ENCODE measurements at regions of chr10 and their contacts with region 1.

Region 1: DNA sequence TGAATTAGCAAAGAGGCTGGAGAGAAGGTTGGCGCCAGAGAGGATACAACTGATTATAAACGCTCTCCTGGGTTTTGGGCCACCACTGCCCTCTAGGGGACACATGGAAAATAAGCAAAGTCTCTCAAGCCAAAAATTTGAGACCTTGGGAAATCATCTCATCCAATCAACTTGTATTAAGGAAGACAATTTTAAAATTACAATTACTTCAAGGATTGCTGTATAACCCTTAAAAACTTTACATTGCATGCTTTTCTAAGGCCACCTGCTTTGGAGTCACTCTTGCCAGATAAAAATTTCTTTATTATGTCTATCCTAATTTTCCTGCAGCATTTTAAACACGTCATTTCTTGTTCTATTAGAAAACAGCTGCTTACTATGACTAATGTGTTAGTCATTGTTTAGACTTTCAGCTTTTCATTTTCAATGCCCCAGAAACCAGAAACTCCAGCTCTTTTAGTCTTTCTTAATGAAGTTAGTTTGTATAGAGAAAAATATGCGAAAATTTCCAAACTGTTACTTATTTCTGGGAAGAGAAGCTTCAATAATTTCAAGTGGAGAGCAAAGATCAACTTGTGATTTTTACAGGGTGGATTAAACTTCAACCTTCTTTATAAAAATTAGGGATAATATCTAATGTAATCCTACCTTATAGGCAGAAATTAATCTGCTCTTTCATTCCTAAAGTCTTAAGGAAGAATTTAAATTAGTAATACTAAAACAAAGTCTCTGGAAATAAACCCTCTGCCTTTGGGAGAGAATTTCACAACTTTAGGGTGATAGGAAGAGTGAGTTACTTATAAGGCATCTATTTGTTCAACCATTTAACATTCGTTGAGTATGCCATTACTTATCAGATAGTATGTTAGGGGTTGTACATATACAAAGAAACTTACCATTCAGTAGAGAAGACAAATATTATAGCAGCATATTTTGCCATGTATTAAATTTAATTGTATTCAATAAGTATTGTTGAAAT is 20.6 kb upstream of the RHOBTB1 start:
- DNase-seq: peak in 12 of 14 experiments; percentile 15 to 66 (median 33)
- ATAC-seq: peak; percentile 67
- H3K4me3 ChIP-seq: no peak overlapping the region
- H3K4me3 Mint-ChIP-seq: no peak overlapping the region
- H3K27ac ChIP-seq: no peak overlapping the region
- H3K27ac Mint-ChIP-seq: no peak overlapping the region
- H3K4me1 ChIP-seq: no peaks in the 10 kb centered on the region
- H3K4me1 Mint-ChIP-seq: no peaks in the 10 kb centered on the region
- H3K27me3 ChIP-seq: peaks cover 0 to 20% of the 10 kb centered on the region in 2 experiments
- H3K27me3 Mint-ChIP-seq: peaks cover 32% of the 10 kb centered on the region
- CTCF ChIP-seq: peak; percentile 95

Region 2: DNA sequence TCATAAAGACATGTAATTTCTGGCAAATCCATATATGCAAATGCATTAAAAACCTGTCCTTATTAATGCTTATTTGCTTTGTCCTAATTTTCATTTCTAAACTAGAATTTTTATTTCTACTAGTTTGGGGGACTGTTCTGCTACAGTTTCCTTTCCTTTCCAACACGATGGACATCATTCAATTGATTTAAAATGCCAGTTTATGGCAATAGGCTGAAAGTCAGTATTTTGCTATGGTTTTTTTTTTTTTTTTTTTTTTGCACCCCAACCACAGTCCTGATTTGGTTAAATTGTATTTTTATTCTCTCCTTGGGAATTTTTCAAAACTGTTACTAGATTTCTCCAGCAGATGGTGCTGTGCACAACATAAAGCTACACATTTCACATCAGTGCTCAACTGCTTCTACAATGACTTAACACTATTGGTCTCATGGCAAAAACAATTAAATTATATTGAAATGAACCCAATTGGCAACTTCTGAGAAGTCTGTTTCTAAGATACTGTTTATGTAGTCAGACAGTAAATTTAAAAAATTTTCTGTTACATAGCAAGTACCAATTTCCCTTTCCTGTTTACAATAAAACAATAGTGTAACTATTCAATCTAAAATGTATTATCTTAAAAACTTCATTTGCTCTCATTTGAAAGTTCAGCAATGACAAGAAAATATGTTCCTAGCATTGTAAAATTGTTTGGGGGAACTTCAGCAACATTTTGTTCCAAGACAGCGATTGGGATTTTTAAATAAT is 864.4 kb before region 1 on chr10:
- CTCF ChIA-PET with region 1: no interaction called
- POLR2A ChIA-PET with region 1: no interaction called
- intact Hi-C with region 1: loop called (anchors 2 to 10 kb)
- DNase-seq: peak in 4 of 14 experiments; percentile 6 to 67 (median 56)
- ATAC-seq: peak; percentile 66
- H3K4me3 ChIP-seq: no peak overlapping the region
- H3K4me3 Mint-ChIP-seq: no peak overlapping the region
- H3K27ac ChIP-seq: no peak overlapping the region
- H3K27ac Mint-ChIP-seq: no peak overlapping the region
- H3K4me1 ChIP-seq: no peaks in the 10 kb centered on the region
- H3K4me1 Mint-ChIP-seq: no peaks in the 10 kb centered on the region
- H3K27me3 ChIP-seq: no peaks in the 10 kb centered on the region
- H3K27me3 Mint-ChIP-seq: no peaks in the 10 kb centered on the region
- CTCF ChIP-seq: peak; percentile 76

Region 3: DNA sequence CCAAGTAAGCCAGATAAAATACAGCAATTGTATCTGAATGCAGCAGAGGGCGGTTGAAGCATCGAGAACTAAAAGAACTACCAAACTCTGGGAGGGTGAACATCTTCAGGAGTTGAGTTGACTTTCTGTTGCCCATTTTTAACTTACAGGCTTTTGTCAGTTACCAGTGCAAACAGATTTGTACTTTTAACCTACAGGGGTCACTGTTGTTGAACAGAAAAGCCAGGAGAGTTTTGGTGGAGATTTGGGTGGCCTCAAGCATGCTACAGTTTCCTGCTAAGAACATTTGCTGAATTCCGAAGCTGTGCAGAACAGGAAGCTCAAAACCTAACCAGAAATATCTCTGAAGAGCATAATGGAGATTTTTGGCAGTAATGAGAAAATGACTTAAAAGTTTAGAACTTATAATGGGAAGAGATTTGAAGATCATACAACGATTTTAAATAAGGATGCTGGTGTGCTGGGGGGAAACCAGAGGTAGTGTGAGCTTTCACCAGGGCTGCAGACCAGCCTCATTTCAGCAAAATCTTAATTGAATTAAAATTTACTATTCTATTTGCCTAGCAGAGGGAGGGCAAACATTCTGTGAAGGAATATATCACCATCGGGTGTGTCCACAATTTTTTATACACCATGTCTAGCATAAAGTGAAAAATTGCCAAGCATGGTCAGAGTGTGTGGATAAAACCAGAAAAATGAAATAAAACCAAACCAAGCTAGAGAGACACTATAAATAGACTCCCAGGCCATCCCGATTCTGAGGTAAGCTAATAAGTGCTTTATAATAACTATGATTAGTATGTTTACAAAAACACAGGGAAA is 849.6 kb before region 1 on chr10:
- CTCF ChIA-PET with region 1: no interaction called
- POLR2A ChIA-PET with region 1: no interaction called
- intact Hi-C with region 1: loop called in 1 of 2 experiments (anchors 1 kb)
- DNase-seq: peak in 4 of 14 experiments; percentile 4 to 51 (median 38)
- ATAC-seq: peak; percentile 68
- H3K4me3 ChIP-seq: no peak overlapping the region
- H3K4me3 Mint-ChIP-seq: no peak overlapping the region
- H3K27ac ChIP-seq: no peak overlapping the region
- H3K27ac Mint-ChIP-seq: no peak overlapping the region
- H3K4me1 ChIP-seq: no peaks in the 10 kb centered on the region
- H3K4me1 Mint-ChIP-seq: no peaks in the 10 kb centered on the region
- H3K27me3 ChIP-seq: no peaks in the 10 kb centered on the region
- H3K27me3 Mint-ChIP-seq: no peaks in the 10 kb centered on the region
- CTCF ChIP-seq: peak; percentile 36

Region 4: DNA sequence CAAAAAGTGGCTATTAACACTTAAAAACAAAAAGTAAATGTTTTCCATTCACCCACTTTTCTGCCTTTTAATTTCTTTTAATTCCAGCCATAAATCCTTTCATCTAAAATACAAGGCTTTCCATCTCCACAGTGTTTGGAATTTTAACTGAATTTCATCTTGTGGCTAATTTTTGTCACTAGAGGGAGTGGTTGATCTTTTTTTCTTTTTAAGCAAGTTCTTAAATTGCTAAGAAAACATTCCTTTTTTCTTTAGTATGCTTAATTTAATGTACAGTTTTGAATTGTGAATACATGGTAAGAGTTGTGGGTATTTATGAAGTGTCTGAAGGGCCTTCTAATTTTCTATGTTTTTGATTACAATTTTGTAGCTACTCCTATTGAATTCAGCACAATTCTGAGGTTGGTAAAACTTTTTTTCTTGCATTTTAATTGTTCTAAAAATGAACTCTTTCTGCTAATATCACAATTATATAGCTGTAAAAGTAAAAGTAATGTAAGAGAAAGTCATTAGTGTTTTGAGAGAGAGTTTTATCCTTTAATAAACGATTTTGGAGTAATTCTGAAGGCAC is 520.0 kb before region 1 on chr10:
- CTCF ChIA-PET with region 1: no interaction called
- POLR2A ChIA-PET with region 1: no interaction called
- intact Hi-C with region 1: loop called in 1 of 2 experiments (anchors 10 kb)
- DNase-seq: peak in 3 of 14 experiments; percentile 12 to 21 (median 13)
- ATAC-seq: no peak
- H3K4me3 ChIP-seq: no peak overlapping the region
- H3K4me3 Mint-ChIP-seq: no peak overlapping the region
- H3K27ac ChIP-seq: no peak overlapping the region
- H3K27ac Mint-ChIP-seq: no peak overlapping the region
- H3K4me1 ChIP-seq: peaks cover 2% of the 10 kb centered on the region
- H3K4me1 Mint-ChIP-seq: peaks cover 23% of the 10 kb centered on the region
- H3K27me3 ChIP-seq: no peaks in the 10 kb centered on the region
- H3K27me3 Mint-ChIP-seq: no peaks in the 10 kb centered on the region
- CTCF ChIP-seq: peak; percentile 33

Region 5: DNA sequence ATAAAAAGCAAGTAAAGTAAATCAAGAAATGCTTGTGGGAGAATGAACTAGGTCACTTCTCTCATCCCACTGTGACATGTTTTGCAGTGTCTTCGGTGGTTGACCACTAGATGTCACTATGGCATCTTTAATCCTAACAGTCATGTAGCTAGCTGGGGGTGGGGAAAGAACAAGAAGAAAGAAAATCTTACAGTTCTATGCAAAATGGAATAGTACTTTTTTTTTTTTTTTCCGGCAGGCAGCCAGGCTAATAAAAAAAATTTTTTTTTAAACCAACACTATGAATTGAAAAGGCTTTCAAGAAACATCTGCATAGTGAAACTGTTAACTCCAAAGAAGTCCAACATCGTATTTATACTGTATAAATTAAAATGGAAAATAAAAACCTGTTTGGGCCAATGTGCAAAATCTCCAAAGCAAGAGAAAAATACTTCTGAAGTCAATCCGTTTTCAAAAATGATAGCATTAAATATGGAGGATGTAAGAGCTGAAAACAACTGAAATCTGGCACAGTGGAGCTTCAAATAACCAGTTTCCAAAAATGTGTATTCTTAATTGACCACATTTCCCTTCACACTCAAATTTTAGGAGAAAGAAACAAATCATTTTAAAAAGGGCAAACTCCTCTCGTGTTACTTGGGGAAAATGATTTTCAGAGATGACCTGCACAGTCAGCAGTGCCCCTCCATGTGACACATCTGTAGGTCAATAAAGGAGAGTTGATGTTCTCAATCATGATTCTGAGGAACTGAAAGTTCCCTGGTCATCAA is 147.7 kb before region 1 on chr10:
- CTCF ChIA-PET with region 1: no interaction called
- POLR2A ChIA-PET with region 1: no interaction called
- intact Hi-C with region 1: loop called (anchors 1 kb)
- DNase-seq: peak in 8 of 14 experiments; percentile 2 to 77 (median 24)
- ATAC-seq: peak; percentile 75
- H3K4me3 ChIP-seq: no peak overlapping the region
- H3K4me3 Mint-ChIP-seq: no peak overlapping the region
- H3K27ac ChIP-seq: no peak overlapping the region
- H3K27ac Mint-ChIP-seq: no peak overlapping the region
- H3K4me1 ChIP-seq: no peaks in the 10 kb centered on the region
- H3K4me1 Mint-ChIP-seq: no peaks in the 10 kb centered on the region
- H3K27me3 ChIP-seq: no peaks in the 10 kb centered on the region
- H3K27me3 Mint-ChIP-seq: no peaks in the 10 kb centered on the region
- CTCF ChIP-seq: peak; percentile 87

Region 6: DNA sequence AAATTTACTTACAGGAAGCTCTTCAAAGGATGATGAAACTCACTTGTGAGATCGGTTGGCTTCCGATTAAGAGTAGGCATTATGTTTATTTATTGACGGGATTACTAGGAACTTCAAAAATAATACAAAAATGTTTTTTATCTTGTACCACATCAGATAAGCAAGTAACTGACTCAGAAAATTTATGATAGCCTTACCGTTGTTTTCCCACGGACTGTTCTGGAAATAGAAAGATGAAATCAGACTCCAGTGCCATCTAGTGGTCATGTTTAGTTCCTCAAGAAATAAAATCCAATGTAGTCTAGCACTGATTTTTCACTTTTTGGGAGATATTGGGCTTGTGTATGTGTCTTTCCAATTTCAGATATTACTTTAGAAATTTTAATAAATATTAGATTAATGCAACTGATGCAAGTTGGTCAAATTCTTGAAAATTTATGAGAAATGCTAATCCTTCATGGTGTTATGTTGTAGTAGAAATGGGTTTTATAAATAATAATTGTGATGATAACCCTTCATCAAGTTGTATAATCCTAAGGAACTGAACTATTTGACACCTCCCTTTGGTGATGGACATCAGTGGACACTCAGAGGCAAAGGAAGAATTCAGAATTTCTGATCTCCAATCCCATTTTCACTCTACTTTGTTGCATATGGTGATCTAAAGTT is 319.8 kb after region 1 on chr10:
- CTCF ChIA-PET with region 1: no interaction called
- POLR2A ChIA-PET with region 1: no interaction called
- intact Hi-C with region 1: loop called in 1 of 2 experiments (anchors 10 kb)
- DNase-seq: peak in 3 of 14 experiments; percentile 53 to 65 (median 59)
- ATAC-seq: peak; percentile 31
- H3K4me3 ChIP-seq: peak overlapping the region; percentile 7
- H3K4me3 Mint-ChIP-seq: peak overlapping the region; percentile 74
- H3K27ac ChIP-seq: no peak overlapping the region
- H3K27ac Mint-ChIP-seq: peak overlapping the region; percentile 16
- H3K4me1 ChIP-seq: no peaks in the 10 kb centered on the region
- H3K4me1 Mint-ChIP-seq: peaks cover 26% of the 10 kb centered on the region
- H3K27me3 ChIP-seq: no peaks in the 10 kb centered on the region
- H3K27me3 Mint-ChIP-seq: no peaks in the 10 kb centered on the region
- CTCF ChIP-seq: peak; percentile 93